Head of caudate nucleus (tissue), 42 donors: ENCODE measurements at regions of chr3 and their contacts with region 1.

Region 1: GRCh38 chr3:97821810-97822775 is at the start of gene CRYBG3:
- DNase-seq: peak; percentile 54 to 94 (median 88)

Region 2: GRCh38 chr3:97871801-97872524 is 49.9 kb after region 1 on chr3:
- intact Hi-C with region 1: loop called (anchors 10 kb)
- DNase-seq: peak in 12 of 42 donors; percentile 1 to 45 (median 22)

Region 3: DNA sequence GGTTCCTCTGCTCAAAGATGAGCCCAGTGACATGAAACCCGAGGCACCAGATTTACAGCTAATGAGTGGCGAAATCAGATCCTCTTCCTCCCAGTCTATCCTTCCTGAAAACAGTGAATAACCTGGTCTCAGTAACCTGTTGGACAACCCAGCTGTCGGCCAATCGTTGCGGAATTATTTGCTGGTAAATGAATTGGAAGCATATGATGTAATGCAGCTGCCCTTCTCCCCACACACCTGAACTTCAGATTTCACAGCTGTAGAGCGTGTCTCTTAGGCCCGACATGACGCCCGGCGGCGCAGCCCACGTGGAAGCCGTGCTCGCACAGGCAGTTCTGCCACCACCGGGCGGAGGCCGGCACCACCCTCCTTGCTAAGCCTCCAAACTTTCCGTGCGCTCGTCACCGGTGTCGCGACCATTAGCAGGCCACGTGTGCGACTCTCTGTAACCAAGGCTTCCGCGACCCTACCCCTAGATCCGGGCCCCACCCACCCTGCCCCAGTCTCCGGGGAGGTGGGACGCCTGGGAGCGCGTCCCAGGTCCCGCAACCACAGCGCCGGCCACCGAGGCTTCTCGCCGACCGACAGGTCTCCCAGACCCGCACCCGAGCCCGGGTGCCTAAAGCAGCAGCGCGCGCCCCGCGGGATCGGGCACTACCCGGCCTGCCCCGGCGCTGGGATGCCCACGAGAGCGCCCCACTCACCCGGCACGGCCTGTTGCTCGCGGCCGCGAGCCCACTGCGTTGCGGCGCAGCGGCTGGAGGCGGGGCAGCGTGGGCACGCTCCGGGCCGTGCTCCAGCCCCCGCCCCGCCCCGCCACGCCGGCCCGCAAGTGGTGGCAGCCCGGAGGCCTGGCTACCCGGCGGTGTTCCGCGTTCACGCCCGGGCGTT is 149.8 kb after region 1 on chr3 and contains the start of gene RIOX2:
- intact Hi-C with region 1: loop called (anchors 5 kb)
- DNase-seq: peak; percentile 52 to 91 (median 80)